ENCODE measurements at regions of chr19 and their contacts with region 1.

Region 1: DNA sequence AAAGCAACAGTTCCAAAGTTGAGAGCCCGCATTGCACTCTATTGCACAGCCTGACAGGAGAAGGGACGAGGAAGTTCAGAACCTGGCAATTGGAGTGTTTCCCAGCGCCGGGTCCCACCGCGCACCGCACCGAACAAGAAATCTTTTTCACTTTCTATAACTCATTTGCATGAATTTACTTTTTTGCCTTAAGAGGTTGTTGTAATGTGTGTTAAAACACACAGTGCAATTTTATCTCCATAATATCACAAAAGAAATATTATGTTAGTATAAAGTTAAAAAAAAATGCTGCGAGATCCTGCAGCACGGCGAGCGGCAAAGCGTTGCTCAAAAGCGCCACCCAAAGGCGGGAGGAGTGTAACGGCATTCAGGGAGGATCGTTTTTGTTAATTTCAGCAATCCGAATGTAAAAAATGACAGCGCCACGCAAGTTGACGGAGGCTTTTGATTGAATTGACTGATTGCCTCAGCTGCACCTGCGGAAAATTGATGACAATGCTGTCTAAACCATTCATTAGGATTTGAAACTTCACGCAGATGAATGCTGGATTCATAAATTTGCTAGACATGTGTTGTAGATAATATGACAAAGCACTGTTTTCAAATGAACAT is 303.6 kb upstream of the ZNF507 start:
- DNase-seq: no peak
- H3K4me3 ChIP-seq: peak overlapping the region; percentile 25; the same call in 1 of the 2 replicates
- CTCF ChIP-seq: peak; percentile 73

Region 2: GRCh38 chr19:30682999-30683536 is 1358.7 kb before region 1 on chr19:
- CTCF ChIA-PET with region 1: interaction called, 17 read pairs
- POLR2A ChIA-PET with region 1: no interaction called
- DNase-seq: peak; percentile 23
- H3K4me3 ChIP-seq: no peak overlapping the region
- CTCF ChIP-seq: peak; percentile 82

Region 3: GRCh38 chr19:31890218-31890617 is 151.6 kb before region 1 on chr19:
- CTCF ChIA-PET with region 1: no interaction called
- POLR2A ChIA-PET with region 1: no interaction called
- DNase-seq: no peak
- H3K4me3 ChIP-seq: no peak overlapping the region
- CTCF ChIP-seq: no peak

Region 4: GRCh38 chr19:32053376-32053775 is 11.6 kb after region 1 on chr19:
- CTCF ChIA-PET with region 1: no interaction called
- POLR2A ChIA-PET with region 1: no interaction called
- DNase-seq: no peak
- H3K4me3 ChIP-seq: no peak overlapping the region
- CTCF ChIP-seq: no peak

Region 5: DNA sequence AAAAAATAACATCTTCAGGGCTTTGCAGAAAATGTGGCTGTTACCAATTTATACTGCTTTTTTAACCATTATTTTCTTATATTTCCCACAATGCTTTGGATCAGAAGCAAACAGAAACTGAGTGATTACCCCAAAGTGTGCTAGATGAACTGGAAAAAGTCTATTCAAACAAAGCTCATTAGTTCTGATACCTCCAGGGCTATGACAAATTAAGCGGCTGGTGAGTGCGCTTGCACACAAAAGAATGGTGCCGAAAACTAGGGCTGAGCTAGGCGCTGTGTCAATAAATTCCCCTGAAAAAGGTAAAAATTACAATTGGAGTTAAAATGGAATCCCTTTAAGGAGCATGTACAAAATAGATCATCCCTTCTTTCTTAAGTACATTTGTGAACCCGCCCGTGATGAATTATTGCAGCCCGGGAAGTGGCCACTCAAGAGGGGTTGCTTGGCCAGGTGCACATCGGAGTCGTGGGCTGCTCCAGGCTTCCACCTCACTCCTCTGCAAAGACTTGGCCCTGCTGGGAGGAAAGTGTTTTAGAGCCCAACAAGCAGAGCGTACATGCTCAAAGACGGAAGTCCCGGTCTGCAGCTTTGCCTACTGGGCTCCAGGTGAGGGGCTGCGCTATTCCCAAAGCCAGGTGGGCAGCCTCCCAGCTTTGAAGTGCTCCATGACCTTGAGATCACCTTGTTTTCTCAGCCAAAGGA is 139.6 kb after region 1 on chr19:
- CTCF ChIA-PET with region 1: no interaction called
- POLR2A ChIA-PET with region 1: no interaction called
- DNase-seq: no peak
- H3K4me3 ChIP-seq: no peak overlapping the region
- CTCF ChIP-seq: no peak

Region 6: GRCh38 chr19:32191921-32192320 is 150.1 kb after region 1 on chr19:
- CTCF ChIA-PET with region 1: no interaction called
- POLR2A ChIA-PET with region 1: no interaction called
- DNase-seq: no peak
- H3K4me3 ChIP-seq: no peak overlapping the region
- CTCF ChIP-seq: no peak